Sigmoid colon (tissue), 7 donors: ENCODE measurements at regions of chr5 and their contacts with region 1.

Region 1: DNA sequence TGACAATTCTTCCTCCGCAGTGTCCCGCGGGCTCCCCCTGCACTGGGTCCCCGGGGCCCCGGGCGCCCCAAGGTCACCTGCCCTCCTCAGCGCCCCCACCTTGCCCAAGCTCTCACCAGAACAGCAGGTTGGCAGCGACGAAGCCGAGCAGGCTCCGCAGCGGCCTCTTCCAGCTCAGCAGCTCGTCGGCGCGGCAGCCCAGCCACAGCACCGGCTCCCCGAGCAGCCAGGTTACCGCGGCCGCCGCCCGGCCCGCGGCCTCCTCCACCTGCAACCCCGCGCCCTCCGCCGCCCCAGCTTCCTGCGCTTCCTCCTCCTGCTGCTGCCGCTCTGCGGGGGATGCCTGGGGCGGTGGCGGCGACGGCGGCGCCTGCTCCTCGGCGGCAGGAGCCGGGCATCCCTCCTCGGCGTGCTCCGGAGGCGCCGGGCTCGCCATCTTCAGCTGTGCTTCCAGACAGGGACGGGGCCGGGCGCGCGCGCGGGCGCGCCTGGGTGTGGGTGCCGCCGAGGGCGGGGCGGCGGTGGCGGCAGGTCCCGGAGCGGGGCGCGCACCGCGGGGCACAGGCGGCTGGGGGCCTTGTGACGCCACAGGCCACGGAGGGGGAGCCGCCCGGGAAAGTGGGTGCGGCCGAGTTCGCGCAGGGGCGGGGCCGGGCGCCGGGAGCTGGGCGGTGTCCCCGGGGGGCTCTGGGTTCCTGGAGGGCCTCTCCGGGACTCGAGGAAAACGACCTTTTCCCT is at the start of gene RETREG1:
- DNase-seq: peak; percentile 82
- H3K4me3 ChIP-seq: peak within 1 kb of the TSS; percentile 42 to 92 (median 81)
- H3K27ac ChIP-seq: peak within 1 kb of the TSS; percentile 64 to 76 (median 72)
- H3K4me1 ChIP-seq: peaks cover 0 to 15% (median 7%) of the 10 kb centered on the region in 4 donors
- H3K27me3 ChIP-seq: no peaks in the 10 kb centered on the region
- CTCF ChIP-seq: no peak
- EP300 ChIP-seq: no peak
- POLR2A ChIP-seq: no peak
- total RNA-seq, gene RETREG1: 10.8 to 14.6 (median 12.6) TPM

Region 2: DNA sequence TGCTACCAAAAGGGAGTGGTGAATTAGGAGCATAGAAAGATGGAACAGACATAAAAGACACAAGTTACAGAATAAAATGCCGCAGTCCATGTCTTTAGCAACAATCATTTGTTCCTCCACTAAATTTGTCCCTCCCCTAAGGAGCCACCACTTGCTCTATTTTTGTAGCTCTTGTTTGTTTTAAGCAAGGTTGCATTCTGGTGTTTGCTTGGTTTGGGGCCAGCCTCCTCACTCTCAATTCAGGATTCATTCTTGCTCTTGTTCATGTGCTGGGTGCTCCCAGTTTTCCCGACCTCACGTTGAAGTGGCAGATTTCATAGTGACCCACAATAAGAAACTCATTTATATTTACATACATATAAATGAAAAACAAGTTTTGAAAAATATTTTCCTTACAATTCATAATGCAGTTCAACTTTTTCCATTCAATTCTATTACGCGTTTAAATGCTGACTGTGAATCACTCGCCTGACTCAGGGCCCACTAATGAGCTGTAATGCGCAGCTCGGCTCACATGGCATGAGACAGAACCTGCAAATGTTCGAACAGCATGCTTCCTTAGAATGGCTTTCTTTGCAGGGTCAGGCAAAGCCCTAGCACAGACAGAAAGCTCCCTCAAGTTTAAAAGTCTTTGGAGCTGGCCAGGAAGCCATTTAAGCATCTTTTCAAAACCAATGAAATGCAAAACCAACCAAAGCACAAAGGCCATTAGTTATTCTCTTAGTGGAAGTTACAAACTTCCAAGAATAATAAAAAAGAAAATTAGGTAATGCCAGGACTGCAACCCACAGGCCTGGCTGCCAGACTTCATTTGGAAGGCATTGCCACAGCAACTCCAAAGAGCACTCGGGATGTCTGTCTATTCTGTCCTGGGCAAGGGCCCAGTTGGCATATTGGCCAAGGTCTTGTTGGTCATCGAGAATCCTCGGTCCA is 41.6 kb before region 1 on chr5:
- intact Hi-C with region 1: loop called (anchors 5 kb)
- DNase-seq: no peak
- H3K4me3 ChIP-seq: no peak overlapping the region
- H3K27ac ChIP-seq: peak overlapping the region in 3 of 4 donors; percentile 46 to 73 (median 59)
- H3K4me1 ChIP-seq: peaks cover 0 to 58% (median 29%) of the 10 kb centered on the region in 4 donors
- H3K27me3 ChIP-seq: no peaks in the 10 kb centered on the region
- CTCF ChIP-seq: no peak
- EP300 ChIP-seq: no peak
- POLR2A ChIP-seq: no peak